ENCODE measurements at regions of chr2 and their contacts with region 1.

Region 1: GRCh38 chr2:232327105-232328041 is 51.2 kb upstream of the ALPP start:
- DNase-seq: peak; percentile 92
- H3K4me3 Mint-ChIP-seq: no peak overlapping the region
- H3K27ac Mint-ChIP-seq: no peak overlapping the region
- H3K4me1 Mint-ChIP-seq: peaks cover 11% of the 10 kb centered on the region
- H3K27me3 Mint-ChIP-seq: no peaks in the 10 kb centered on the region

Region 2: DNA sequence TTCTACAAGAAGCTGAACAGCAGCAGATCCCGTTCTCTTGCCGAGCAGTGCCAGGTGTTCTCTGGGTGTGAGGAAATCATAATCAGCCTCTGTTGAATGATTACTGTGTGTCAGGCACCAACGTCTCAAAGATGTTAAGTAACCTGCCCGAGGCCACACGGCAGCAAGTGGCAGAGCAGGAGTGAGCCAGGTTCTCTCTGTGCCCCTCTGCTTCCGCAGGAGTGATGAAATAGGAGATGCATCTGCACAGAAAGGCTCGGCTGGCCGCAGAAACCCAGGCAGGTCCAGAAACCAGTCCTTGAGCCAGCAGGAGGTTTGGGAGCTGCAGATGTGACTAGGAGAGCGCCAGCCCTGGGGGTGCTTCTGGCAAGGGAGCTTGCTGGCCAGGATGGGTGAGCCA is 472.7 kb before region 1 on chr2:
- CTCF ChIA-PET with region 1: no interaction called
- intact Hi-C with region 1: loop called (anchors 5 kb)
- DNase-seq: no peak
- H3K4me3 Mint-ChIP-seq: no peak overlapping the region
- H3K27ac Mint-ChIP-seq: no peak overlapping the region
- H3K4me1 Mint-ChIP-seq: no peaks in the 10 kb centered on the region
- H3K27me3 Mint-ChIP-seq: peaks cover 6% of the 10 kb centered on the region

Region 3: DNA sequence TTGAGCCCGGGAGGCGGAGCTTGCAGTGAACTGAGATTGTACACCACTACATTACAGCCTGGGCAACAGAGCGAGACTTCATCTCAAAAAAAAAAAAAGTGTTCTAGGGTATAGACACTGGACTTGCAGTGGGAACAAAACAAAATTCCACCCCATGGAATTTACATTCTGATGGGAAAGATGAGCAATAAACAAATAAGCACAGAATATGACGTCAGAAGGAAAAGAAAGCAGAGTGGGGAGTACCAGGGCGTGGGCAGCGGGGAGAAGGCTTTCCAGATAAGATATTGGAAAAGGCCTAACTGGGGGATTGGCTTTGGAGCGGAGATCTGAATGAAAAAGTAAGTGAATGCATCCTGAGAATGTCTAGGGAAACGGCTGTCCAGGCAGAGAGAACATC is 418.8 kb before region 1 on chr2:
- CTCF ChIA-PET with region 1: interaction called, 11 read pairs
- intact Hi-C with region 1: loop called (anchors 1 kb)
- DNase-seq: no peak
- H3K4me3 Mint-ChIP-seq: no peak overlapping the region
- H3K27ac Mint-ChIP-seq: no peak overlapping the region
- H3K4me1 Mint-ChIP-seq: peaks cover 11% of the 10 kb centered on the region
- H3K27me3 Mint-ChIP-seq: no peaks in the 10 kb centered on the region

Region 4: GRCh38 chr2:232142049-232142448 is 185.3 kb before region 1 on chr2:
- CTCF ChIA-PET with region 1: interaction called, 3 read pairs
- intact Hi-C with region 1: loop called (anchors 1 kb)
- DNase-seq: peak; percentile 65
- H3K4me3 Mint-ChIP-seq: no peak overlapping the region
- H3K27ac Mint-ChIP-seq: no peak overlapping the region
- H3K4me1 Mint-ChIP-seq: peaks cover 37% of the 10 kb centered on the region
- H3K27me3 Mint-ChIP-seq: no peaks in the 10 kb centered on the region

Region 5: DNA sequence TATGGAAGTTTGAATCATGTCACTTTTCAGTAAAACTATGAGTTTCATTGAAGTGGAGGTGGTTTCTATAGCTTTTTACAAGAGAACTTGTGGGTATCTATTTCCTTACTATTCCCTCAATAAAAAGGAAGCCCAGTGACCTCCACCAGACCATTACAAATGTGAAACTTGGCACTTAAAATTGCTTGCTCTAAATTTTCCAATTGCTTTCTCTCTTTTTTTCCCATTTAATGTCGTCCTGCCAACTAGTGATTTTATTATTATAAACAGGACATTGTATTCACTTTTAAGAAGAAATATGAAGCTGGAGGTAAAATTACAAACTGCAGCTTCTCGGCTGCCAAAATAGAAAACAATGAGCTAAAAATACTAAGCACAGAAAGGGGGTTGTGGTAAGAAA is 157.0 kb before region 1 on chr2:
- CTCF ChIA-PET with region 1: no interaction called
- intact Hi-C with region 1: no loop called
- DNase-seq: no peak
- H3K4me3 Mint-ChIP-seq: no peak overlapping the region
- H3K27ac Mint-ChIP-seq: no peak overlapping the region
- H3K4me1 Mint-ChIP-seq: peaks cover 5% of the 10 kb centered on the region
- H3K27me3 Mint-ChIP-seq: no peaks in the 10 kb centered on the region

Region 6: GRCh38 chr2:232292395-232293154 is 34.8 kb before region 1 on chr2:
- CTCF ChIA-PET with region 1: interaction called, 13 read pairs
- intact Hi-C with region 1: loop called (anchors 2 kb)
- DNase-seq: peak; percentile 78
- H3K4me3 Mint-ChIP-seq: no peak overlapping the region
- H3K27ac Mint-ChIP-seq: no peak overlapping the region
- H3K4me1 Mint-ChIP-seq: peaks cover 5% of the 10 kb centered on the region
- H3K27me3 Mint-ChIP-seq: no peaks in the 10 kb centered on the region

Region 7: DNA sequence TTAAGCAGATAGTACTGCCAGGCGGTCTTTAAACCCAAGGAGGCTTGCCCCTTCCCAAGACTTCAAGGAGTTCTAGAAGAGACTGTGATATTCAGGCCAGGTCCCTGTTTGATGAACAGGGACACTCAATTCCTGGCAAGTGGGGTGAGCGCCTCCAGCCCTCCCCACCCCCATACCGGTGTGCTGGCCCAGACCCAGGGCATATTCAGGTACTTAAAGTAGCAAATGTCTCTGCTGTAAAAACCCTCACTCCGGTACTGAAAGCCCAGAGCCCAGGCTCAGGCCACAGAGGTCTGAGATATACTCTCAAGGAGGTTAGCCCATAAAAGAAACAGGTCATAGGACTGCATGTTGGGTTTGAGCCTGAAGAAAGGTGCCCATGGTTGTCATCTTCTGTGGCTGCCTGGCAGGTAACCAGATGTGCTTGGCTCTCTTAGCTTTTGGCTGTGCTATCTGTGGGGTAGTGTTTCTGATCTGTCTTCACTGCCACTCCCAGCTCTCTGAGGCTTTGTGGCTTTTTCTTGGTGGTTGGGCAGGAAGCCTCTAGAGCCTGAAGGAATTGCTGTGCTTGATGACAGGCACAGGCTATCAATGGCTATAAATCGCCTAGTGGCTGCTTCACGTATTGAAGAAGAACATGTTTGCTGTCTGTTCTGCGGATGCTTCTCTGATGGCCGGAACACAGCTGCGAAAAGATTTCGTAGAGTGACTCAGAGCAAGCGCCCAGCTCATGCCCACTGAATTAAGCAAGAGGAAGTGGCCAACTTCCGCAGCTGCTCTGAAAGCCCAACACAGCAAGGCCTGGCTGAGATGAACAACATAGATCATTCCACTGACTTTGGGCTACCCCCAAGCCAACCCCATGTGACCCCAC is 12.1 kb before region 1 on chr2:
- CTCF ChIA-PET with region 1: interaction called, 66 read pairs
- intact Hi-C with region 1: no loop called
- DNase-seq: peak; percentile 90
- H3K4me3 Mint-ChIP-seq: peak overlapping the region; percentile 61
- H3K27ac Mint-ChIP-seq: peak overlapping the region; percentile 92
- H3K4me1 Mint-ChIP-seq: peaks cover 70% of the 10 kb centered on the region
- H3K27me3 Mint-ChIP-seq: no peaks in the 10 kb centered on the region

Measured in activated naive CD4-positive, alpha-beta T cell treated with anti-CD3 and anti-CD28 coated beads for 36 hours (primary cell).